Left lung (tissue), 14 donors: ENCODE measurements at regions of chrX and their contacts with region 1.

Region 1: DNA sequence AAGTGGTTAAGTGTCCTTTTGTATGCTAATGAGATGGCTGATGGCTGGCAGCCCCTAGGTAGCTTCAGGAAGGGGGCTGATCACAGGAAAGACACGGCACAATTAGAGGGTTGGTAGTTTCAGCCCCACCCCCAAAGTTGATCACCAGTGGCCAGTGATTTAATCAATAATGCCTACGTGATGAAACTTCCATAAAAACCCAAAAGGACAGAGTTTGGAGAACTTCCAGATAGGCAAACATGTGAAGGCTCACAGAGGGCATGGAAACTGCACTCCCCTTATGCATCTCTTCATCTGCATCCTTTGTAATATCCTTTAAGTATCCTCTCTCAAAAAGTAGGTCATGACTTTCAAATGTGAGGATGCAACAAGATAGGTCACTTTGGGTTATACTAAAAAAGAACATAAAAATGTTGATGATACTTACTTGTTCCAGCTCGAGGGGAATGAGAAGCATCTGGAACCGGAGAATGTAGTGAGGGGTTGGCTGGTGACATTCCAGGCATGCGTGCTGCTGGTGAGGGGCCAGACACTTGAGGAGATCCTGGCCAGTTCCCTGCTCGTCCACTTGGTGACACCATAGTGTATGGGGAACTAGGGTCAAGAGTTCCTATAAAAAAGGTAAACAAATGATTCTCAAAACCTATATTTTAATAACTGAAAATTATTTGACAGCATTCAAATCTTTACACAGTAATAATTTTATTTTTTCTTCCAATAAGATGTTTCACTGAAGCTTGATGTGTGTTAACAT is 16.7 kb upstream of the CXorf38 start:
- DNase-seq: peak in 1 of 4 donors; percentile 36
- ATAC-seq: peak; percentile 49
- H3K4me3 ChIP-seq: no peak overlapping the region
- H3K27ac ChIP-seq: no peak overlapping the region
- H3K4me1 ChIP-seq: no peaks in the 10 kb centered on the region
- H3K27me3 ChIP-seq: no peaks in the 10 kb centered on the region
- CTCF ChIP-seq: no peak

Region 2: GRCh38 chrX:40778861-40779575 is 115.0 kb after region 1 on chrX:
- intact Hi-C with region 1: no loop called
- DNase-seq: no peak
- ATAC-seq: no peak
- H3K4me3 ChIP-seq: no peak overlapping the region
- H3K27ac ChIP-seq: no peak overlapping the region
- H3K4me1 ChIP-seq: no peaks in the 10 kb centered on the region
- H3K27me3 ChIP-seq: no peaks in the 10 kb centered on the region
- CTCF ChIP-seq: no peak

Region 3: GRCh38 chrX:40792433-40792832 is 128.4 kb after region 1 on chrX:
- intact Hi-C with region 1: loop called in 1 of 2 experiments (anchors 10 kb)
- DNase-seq: no peak
- ATAC-seq: no peak
- H3K4me3 ChIP-seq: no peak overlapping the region
- H3K27ac ChIP-seq: no peak overlapping the region
- H3K4me1 ChIP-seq: no peaks in the 10 kb centered on the region
- H3K27me3 ChIP-seq: no peaks in the 10 kb centered on the region
- CTCF ChIP-seq: no peak

Region 4: DNA sequence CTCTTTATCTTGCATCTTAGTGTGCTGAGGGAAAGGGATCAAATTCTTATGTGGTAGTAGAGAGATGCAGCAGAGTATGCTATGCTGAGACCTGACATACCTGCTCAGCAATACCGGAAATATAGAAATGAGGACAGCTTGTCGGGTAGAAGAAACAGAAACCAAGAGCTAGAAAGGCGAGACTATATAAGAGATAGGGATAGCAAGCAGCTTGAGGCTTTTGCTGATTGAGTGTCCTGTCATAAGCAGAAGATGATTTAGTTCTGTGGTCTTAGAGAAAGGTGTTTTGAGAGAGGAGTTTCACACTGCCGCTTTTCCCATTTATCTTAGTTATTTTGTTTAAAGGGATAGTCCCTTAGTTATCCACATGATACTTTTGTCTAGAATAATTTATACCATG is 452.9 kb after region 1 on chrX:
- intact Hi-C with region 1: loop called in 1 of 2 experiments (anchors 10 kb)
- DNase-seq: no peak
- ATAC-seq: peak; percentile 52
- H3K4me3 ChIP-seq: no peak overlapping the region
- H3K27ac ChIP-seq: no peak overlapping the region
- H3K4me1 ChIP-seq: peaks cover 0 to 73% of the 10 kb centered on the region in 2 donors
- H3K27me3 ChIP-seq: no peaks in the 10 kb centered on the region
- CTCF ChIP-seq: no peak